ENCODE measurements at regions of chr10 and their contacts with region 1.

Region 1: GRCh38 chr10:62610649-62611229 is 193.8 kb upstream of the ADO start:
- DNase-seq: peak; percentile 81

Region 2: GRCh38 chr10:63143987-63144386 is 533.2 kb after region 1 on chr10:
- intact Hi-C with region 1: loop called (anchors 5 kb)
- DNase-seq: no peak

Measured in cardiac septum (tissue), 1 donor.